Endothelial cell of umbilical vein (primary cell): ENCODE measurements at regions of chr10 and their contacts with region 1.

Region 1: GRCh38 chr10:114043532-114044246 is at the start of gene ADRB1:
- DNase-seq: peak; percentile 61
- H3K4me3 ChIP-seq: peak within 1 kb of the TSS; percentile 30 to 38 (median 38)
- H3K27ac ChIP-seq: no peak within 1 kb of the TSS
- H3K4me1 ChIP-seq: peaks cover 4% of the 10 kb centered on the region
- H3K27me3 ChIP-seq: peaks cover 9 to 11% of the 10 kb centered on the region in 2 experiments
- CTCF ChIP-seq: no peak
- POLR2A ChIP-seq: no peak
- total RNA-seq, gene ADRB1: 0.97 and 1.8 TPM in 2 replicates

Region 2: DNA sequence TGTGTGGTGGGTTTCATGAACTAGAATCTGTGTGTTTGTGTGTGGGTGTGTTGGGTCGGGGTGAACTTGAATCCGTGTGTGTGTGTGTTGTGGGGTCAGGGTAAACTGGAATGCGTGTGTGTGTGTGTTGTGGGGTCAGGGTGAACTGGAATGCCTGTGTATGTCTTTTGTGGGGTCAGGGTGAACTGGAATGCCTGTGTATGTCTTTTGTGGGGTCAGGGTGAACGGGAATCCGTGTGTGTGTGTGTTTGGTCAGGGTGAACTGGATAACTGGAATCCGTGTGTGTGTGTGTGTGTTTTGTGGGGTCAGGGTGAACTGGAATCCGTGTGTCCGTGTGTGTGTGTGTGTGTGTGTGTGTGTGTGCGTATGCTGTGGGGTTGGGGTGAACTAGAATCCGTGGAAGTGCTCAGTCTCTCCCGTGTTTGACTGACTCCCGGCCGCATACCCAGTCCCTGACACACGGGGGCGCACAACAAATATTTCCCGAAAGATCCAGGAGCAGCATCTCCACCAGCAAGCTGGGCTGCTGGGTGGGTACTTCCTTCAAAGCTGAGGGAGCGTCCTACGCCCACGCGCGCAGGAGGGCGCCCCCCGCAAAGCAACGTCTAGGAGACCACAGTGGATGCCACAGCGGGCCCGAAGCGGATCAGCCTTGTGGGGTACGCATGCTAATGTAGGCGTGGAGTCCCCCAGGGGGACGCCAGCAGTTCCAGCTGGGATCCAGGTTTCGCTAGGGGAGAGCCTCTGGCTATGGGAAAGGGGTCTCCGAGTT is 364.8 kb before region 1 on chr10:
- CTCF ChIA-PET with region 1: no interaction called
- POLR2A ChIA-PET with region 1: no interaction called
- dilution Hi-C with region 1: no loop called
- intact Hi-C with region 1: loop called (anchors 2 kb)
- DNase-seq: peak; percentile 87
- H3K4me3 ChIP-seq: peak overlapping the region; percentile 77 to 82 (median 78)
- H3K27ac ChIP-seq: peak overlapping the region; percentile 90
- H3K4me1 ChIP-seq: peaks cover 11% of the 10 kb centered on the region
- H3K27me3 ChIP-seq: no peaks in the 10 kb centered on the region
- CTCF ChIP-seq: peak; percentile 73 to 81
- POLR2A ChIP-seq: no peak

Region 3: GRCh38 chr10:113802997-113803396 is 240.7 kb before region 1 on chr10:
- CTCF ChIA-PET with region 1: no interaction called
- POLR2A ChIA-PET with region 1: no interaction called
- dilution Hi-C with region 1: no loop called
- intact Hi-C with region 1: loop called (anchors 1 kb)
- DNase-seq: no peak
- H3K4me3 ChIP-seq: no peak overlapping the region
- H3K27ac ChIP-seq: no peak overlapping the region
- H3K4me1 ChIP-seq: no peaks in the 10 kb centered on the region
- H3K27me3 ChIP-seq: peaks cover 6 to 9% of the 10 kb centered on the region in 2 experiments
- CTCF ChIP-seq: no peak
- POLR2A ChIP-seq: no peak

Region 4: GRCh38 chr10:113879691-113880090 is 164.0 kb before region 1 on chr10:
- CTCF ChIA-PET with region 1: no interaction called
- POLR2A ChIA-PET with region 1: no interaction called
- dilution Hi-C with region 1: no loop called
- intact Hi-C with region 1: loop called (anchors 5 kb)
- DNase-seq: peak; percentile 13
- H3K4me3 ChIP-seq: no peak overlapping the region
- H3K27ac ChIP-seq: peak overlapping the region; percentile 72
- H3K4me1 ChIP-seq: peaks cover 33% of the 10 kb centered on the region
- H3K27me3 ChIP-seq: no peaks in the 10 kb centered on the region
- CTCF ChIP-seq: no peak
- POLR2A ChIP-seq: no peak

Region 5: DNA sequence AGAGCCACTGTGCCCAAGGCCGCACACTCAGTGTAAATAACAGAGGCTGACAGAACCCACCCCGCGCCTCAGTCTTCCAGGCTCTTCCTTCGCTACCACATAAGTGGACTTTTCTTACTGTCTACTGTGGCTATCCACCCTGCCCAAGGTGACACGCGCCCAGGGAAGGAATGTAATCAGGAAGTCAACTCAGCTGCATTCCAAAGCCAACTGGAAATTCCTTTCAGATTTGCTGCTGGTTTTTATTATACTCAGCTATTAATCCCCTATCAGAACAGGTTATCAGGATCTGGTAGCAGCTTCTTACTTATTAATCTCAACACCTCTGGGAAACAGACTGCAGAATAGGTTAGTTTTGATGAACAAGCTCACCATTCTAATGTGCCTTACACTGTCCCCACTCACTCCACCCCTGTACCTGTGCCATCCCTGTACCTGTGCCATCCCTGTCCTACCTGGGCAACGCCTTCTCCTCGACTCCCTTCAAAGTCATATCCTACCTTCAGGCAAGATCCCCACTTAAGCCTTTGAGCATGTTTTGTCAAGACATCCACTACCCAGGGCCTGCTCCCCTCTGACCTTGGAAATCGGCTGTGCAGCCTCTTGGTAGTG is 98.5 kb before region 1 on chr10:
- CTCF ChIA-PET with region 1: interaction called, 4 read pairs
- POLR2A ChIA-PET with region 1: no interaction called
- dilution Hi-C with region 1: no loop called
- intact Hi-C with region 1: loop called (anchors 5 kb)
- DNase-seq: peak; percentile 46
- H3K4me3 ChIP-seq: no peak overlapping the region
- H3K27ac ChIP-seq: peak overlapping the region; percentile 22
- H3K4me1 ChIP-seq: peaks cover 11% of the 10 kb centered on the region
- H3K27me3 ChIP-seq: no peaks in the 10 kb centered on the region
- CTCF ChIP-seq: no peak
- POLR2A ChIP-seq: no peak

Region 6: DNA sequence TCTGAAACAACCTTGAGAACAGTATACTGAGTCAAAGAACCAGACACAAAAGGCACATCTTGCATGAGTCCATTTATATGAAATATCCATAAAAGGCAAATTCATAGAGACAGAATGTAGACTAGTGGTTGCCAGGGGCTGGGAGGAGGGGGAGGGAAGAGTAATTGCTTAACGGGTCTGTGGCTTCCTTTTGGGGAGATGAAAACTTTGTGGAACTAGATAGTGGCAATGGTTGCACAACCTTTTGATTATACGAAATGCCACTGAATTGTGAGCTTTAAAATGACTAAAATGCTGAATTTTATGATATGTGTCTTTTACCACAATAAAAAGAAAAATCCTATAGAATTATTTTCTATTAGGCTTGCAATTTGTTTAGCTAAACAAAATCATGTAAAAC is 16.8 kb after region 1 on chr10:
- CTCF ChIA-PET with region 1: interaction called, 11 read pairs
- POLR2A ChIA-PET with region 1: interaction called, 7 read pairs
- dilution Hi-C with region 1: no loop called
- intact Hi-C with region 1: no loop called
- DNase-seq: no peak
- H3K4me3 ChIP-seq: no peak overlapping the region
- H3K27ac ChIP-seq: no peak overlapping the region
- H3K4me1 ChIP-seq: no peaks in the 10 kb centered on the region
- H3K27me3 ChIP-seq: peaks cover 0 to 1% of the 10 kb centered on the region in 2 experiments
- CTCF ChIP-seq: no peak
- POLR2A ChIP-seq: no peak

Region 7: GRCh38 chr10:114103284-114103683 is 59.6 kb after region 1 on chr10:
- CTCF ChIA-PET with region 1: interaction called, 7 read pairs
- POLR2A ChIA-PET with region 1: no interaction called
- dilution Hi-C with region 1: no loop called
- intact Hi-C with region 1: loop called (anchors 2 kb)
- DNase-seq: peak; percentile 59
- H3K4me3 ChIP-seq: no peak overlapping the region
- H3K27ac ChIP-seq: no peak overlapping the region
- H3K4me1 ChIP-seq: peaks cover 9% of the 10 kb centered on the region
- H3K27me3 ChIP-seq: peaks cover 0 to 3% of the 10 kb centered on the region in 2 experiments
- CTCF ChIP-seq: peak; percentile 32
- POLR2A ChIP-seq: no peak